Mucosa of descending colon (tissue), 3 donors: ENCODE measurements at regions of chr3 and their contacts with region 1.

Region 1: DNA sequence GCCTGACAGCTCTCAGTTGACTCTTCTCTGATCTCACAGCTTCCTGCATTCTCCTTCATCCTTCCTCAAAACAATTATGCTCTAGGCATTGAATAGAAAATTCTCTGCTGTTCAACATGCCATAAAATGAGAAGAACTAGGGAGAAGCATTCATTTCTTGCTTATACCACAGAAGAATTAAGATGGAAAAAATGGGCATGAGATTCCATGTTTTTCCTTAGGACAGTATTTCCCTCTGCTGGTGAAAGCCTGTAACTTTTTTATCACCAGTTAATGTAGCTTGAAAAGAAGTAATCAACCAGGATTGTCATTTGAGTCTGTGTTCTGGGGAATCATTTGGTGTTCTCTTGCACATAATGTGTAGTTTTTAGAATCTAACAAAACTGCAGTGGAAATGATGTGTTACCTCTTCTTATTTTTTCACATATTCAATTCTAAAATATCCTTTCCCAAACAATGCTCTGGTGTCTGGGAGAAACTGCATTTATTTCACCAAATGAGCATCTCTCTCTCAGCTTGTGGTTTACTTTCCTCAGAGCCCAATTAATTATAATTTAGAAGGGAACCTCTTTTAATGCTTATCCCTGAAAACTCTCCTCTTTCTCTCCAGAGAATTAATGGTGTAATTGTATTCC is 92.8 kb upstream of the DCBLD2 start:
- DNase-seq: no peak
- ATAC-seq: no peak
- H3K4me3 ChIP-seq: no peak overlapping the region
- H3K4me1 ChIP-seq: no peaks in the 10 kb centered on the region
- CTCF ChIP-seq: peak; percentile 15

Region 2: GRCh38 chr3:98817547-98818041 is 176.7 kb before region 1 on chr3:
- intact Hi-C with region 1: loop called (anchors 5 kb)
- DNase-seq: no peak
- ATAC-seq: peak; percentile 71
- H3K4me3 ChIP-seq: no peak overlapping the region
- H3K4me1 ChIP-seq: no peaks in the 10 kb centered on the region
- CTCF ChIP-seq: peak; percentile 37

Region 3: GRCh38 chr3:99049164-99049563 is 54.9 kb after region 1 on chr3:
- intact Hi-C with region 1: no loop called
- DNase-seq: no peak
- ATAC-seq: no peak
- H3K4me3 ChIP-seq: no peak overlapping the region
- H3K4me1 ChIP-seq: no peaks in the 10 kb centered on the region
- CTCF ChIP-seq: no peak

Region 4: DNA sequence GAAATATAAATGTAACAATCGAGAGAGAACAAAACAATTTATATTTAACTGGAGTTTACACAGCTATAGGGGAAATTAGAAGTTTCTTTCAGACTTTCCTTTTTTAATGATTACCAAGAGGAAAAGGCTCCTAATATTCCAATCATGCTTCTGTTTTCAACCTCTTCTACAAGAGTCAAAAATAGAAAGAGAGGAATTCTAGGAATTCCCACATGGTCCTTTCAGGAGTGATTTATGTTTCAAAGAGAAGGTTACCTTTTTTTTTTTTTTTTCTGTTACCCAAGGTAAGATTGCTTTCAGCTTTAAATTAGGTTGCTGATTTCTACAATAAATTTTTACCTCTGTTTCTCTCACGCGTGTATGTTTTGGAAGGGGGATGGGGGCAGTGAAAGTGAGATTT is 262.5 kb after region 1 on chr3:
- intact Hi-C with region 1: no loop called
- DNase-seq: no peak
- ATAC-seq: no peak
- H3K4me3 ChIP-seq: no peak overlapping the region
- H3K4me1 ChIP-seq: no peaks in the 10 kb centered on the region
- CTCF ChIP-seq: no peak